CD4-positive, alpha-beta memory T cell (primary cell): ENCODE measurements at regions of chr19 and their contacts with region 1.

Region 1: GRCh38 chr19:36772311-36773222 is at the start of gene ZNF850:
- DNase-seq: peak; percentile 94 to 98 (median 95)
- H3K4me3 ChIP-seq: peak within 1 kb of the TSS; percentile 85 to 90
- H3K4me3 Mint-ChIP-seq: peak within 1 kb of the TSS; percentile 94 to 100 (median 98)
- H3K27ac ChIP-seq: peak within 1 kb of the TSS; percentile 81
- H3K27ac Mint-ChIP-seq: peak within 1 kb of the TSS; percentile 91 to 97 (median 95)
- H3K4me1 ChIP-seq: peaks cover 19% of the 10 kb centered on the region
- H3K4me1 Mint-ChIP-seq: peaks cover 18 to 27% (median 24%) of the 10 kb centered on the region in 4 donors
- H3K27me3 ChIP-seq: no peaks in the 10 kb centered on the region
- H3K27me3 Mint-ChIP-seq: peaks cover 0 to 2% of the 10 kb centered on the region in 2 donors
- total RNA-seq, gene ZNF850: 3.7 to 5.4 TPM

Region 2: GRCh38 chr19:36378625-36379509 is 393.7 kb before region 1 on chr19 and contains the start of gene ZFP14:
- CTCF ChIA-PET with region 1: no interaction called
- POLR2A ChIA-PET with region 1: no interaction called
- intact Hi-C with region 1: loop called (anchors 2 kb)
- DNase-seq: peak; percentile 92 to 96 (median 95)
- H3K4me3 ChIP-seq: peak within 1 kb of the TSS; percentile 76 to 87
- H3K4me3 Mint-ChIP-seq: peak within 1 kb of the TSS; percentile 87 to 96 (median 94)
- H3K27ac ChIP-seq: peak within 1 kb of the TSS; percentile 76
- H3K27ac Mint-ChIP-seq: peak within 1 kb of the TSS; percentile 81 to 97 (median 93)
- H3K4me1 ChIP-seq: peaks cover 18% of the 10 kb centered on the region
- H3K4me1 Mint-ChIP-seq: peaks cover 13 to 34% (median 18%) of the 10 kb centered on the region in 4 donors
- H3K27me3 ChIP-seq: no peaks in the 10 kb centered on the region
- H3K27me3 Mint-ChIP-seq: no peaks in the 10 kb centered on the region
- total RNA-seq, gene ZFP14: 20.7 to 21.2 TPM

Region 3: DNA sequence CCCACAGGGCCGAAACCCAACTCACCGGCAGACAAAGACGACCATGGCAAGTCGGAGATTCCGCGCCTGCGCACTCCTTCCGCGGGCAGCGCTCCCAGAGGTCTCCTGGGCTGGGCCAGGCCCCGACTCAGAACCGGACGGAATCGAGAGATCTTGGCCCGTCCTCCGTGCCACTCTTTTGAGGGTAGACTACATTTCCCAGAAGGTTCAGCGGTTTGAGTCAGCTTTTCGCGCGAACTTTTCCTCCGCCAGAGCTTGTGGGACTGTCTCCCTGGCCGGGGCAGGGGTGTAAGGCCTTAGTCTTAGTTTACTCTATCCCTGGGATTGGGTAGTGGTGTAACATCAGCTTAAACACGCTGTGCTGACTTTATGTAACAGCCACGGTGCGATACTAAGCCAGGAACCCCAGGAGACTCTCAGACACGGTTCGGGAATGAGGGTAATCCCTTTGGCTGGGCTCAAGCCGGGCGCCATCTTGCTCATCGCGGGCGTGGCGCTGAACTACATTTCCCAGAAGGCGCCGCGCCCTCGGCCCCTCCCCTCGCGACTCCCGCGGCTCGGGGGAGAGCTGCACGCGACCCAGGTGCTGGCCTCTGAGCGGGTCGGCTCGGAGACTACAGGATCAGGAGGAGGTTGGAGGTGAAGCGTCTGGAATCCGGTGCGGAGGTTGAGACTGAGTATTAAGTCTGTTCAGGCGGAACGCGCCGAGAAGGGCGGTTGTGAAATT is 244.2 kb before region 1 on chr19 and contains the start of gene ZNF260:
- CTCF ChIA-PET with region 1: no interaction called
- POLR2A ChIA-PET with region 1: interaction called, 7 read pairs
- intact Hi-C with region 1: loop called (anchors 1 kb)
- DNase-seq: peak; percentile 90 to 95 (median 93)
- H3K4me3 ChIP-seq: peak within 1 kb of the TSS; percentile 88 to 99
- H3K4me3 Mint-ChIP-seq: peak within 1 kb of the TSS; percentile 91 to 100 (median 97)
- H3K27ac ChIP-seq: peak within 1 kb of the TSS; percentile 87
- H3K27ac Mint-ChIP-seq: peak within 1 kb of the TSS; percentile 91 to 99 (median 97)
- H3K4me1 ChIP-seq: peaks cover 22% of the 10 kb centered on the region
- H3K4me1 Mint-ChIP-seq: peaks cover 17 to 29% (median 22%) of the 10 kb centered on the region in 4 donors
- H3K27me3 ChIP-seq: no peaks in the 10 kb centered on the region
- H3K27me3 Mint-ChIP-seq: no peaks in the 10 kb centered on the region
- total RNA-seq, gene ZNF260: 15.4 to 18.8 TPM

Region 4: GRCh38 chr19:36605101-36605876 is 167.3 kb before region 1 on chr19 and contains the start of gene ZNF382:
- CTCF ChIA-PET with region 1: no interaction called
- POLR2A ChIA-PET with region 1: interaction called, 6 read pairs
- intact Hi-C with region 1: loop called (anchors 10 kb)
- DNase-seq: peak; percentile 85 to 89 (median 86)
- H3K4me3 ChIP-seq: peak within 1 kb of the TSS; percentile 32 to 85
- H3K4me3 Mint-ChIP-seq: peak within 1 kb of the TSS; percentile 90 to 99 (median 96)
- H3K27ac ChIP-seq: peak within 1 kb of the TSS; percentile 91
- H3K27ac Mint-ChIP-seq: peak within 1 kb of the TSS; percentile 82 to 98 (median 92)
- H3K4me1 ChIP-seq: peaks cover 16% of the 10 kb centered on the region
- H3K4me1 Mint-ChIP-seq: peaks cover 17 to 33% (median 23%) of the 10 kb centered on the region in 4 donors
- H3K27me3 ChIP-seq: no peaks in the 10 kb centered on the region
- H3K27me3 Mint-ChIP-seq: peaks cover 0 to 1% of the 10 kb centered on the region in 2 donors
- total RNA-seq, gene ZNF382: 21.1 to 21.9 TPM

Region 5: DNA sequence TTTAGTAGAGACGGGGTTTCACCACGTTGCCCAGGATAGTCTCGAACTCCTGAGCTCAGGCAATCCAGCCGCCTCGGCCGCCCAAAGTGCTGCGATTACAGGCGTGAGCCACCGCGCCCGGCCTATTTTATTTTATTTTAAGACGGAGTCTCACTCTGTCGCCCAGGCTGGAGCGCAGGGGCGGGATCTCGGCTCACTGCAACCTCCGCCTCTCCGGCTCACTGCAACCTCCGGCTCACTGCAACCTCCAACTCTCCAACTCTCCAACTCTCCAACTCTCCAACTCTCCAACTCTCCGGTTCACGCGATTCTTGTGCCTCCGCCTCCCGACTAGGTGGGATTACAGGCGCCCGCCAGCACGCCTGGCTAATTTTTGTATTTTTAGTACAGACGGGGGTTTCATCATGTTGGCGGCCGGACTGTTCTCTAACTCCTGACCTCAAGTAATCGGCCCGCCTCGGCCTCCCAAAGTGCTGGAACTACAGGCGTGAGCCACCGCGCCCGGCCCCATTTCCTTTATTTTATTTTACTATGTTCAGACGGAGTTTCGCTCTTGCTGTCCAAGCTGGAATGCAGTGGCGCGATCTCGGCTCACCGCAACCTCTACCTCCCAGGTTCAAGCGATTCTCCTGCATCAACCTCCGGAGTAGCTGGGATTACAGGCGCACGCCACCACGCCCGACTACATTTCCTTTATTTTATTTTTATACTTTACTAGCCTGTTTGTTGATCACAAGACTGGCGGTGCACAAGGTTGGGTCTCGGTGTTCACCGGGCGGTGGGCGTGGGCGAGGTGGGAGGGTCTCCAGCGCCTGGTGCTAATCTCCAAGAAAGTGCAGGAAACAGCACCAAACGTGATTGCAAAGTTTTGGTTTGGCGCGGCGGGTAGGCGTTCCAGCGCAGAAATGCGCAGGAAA is 23.8 kb after region 1 on chr19:
- CTCF ChIA-PET with region 1: no interaction called
- POLR2A ChIA-PET with region 1: interaction called, 9 read pairs
- intact Hi-C with region 1: loop called (anchors 1 kb)
- DNase-seq: no peak
- H3K4me3 ChIP-seq: peak overlapping the region; percentile 94 to 96
- H3K4me3 Mint-ChIP-seq: peak overlapping the region; percentile 99 to 100 (median 99)
- H3K27ac ChIP-seq: peak overlapping the region; percentile 79
- H3K27ac Mint-ChIP-seq: peak overlapping the region; percentile 99 to 100 (median 100)
- H3K4me1 ChIP-seq: peaks cover 4% of the 10 kb centered on the region
- H3K4me1 Mint-ChIP-seq: peaks cover 5 to 35% (median 21%) of the 10 kb centered on the region in 4 donors
- H3K27me3 ChIP-seq: no peaks in the 10 kb centered on the region
- H3K27me3 Mint-ChIP-seq: peaks cover 0 to 6% of the 10 kb centered on the region in 2 donors

Region 6: GRCh38 chr19:36915992-36916830 is 143.6 kb after region 1 on chr19 and contains the starts of genes ZNF568 and ZNF829:
- CTCF ChIA-PET with region 1: no interaction called
- POLR2A ChIA-PET with region 1: no interaction called
- intact Hi-C with region 1: loop called (anchors 1 kb)
- DNase-seq: peak; percentile 92 to 98 (median 95)
- H3K4me3 ChIP-seq: peak within 1 kb of the TSS; percentile 60 to 88
- H3K4me3 Mint-ChIP-seq: peak within 1 kb of the TSS; percentile 84 to 97 (median 94)
- H3K27ac ChIP-seq: peak within 1 kb of the TSS; percentile 93
- H3K27ac Mint-ChIP-seq: peak within 1 kb of the TSS; percentile 81 to 97 (median 96)
- H3K4me1 ChIP-seq: peaks cover 14% of the 10 kb centered on the region
- H3K4me1 Mint-ChIP-seq: peaks cover 19 to 39% (median 28%) of the 10 kb centered on the region in 4 donors
- H3K27me3 ChIP-seq: no peaks in the 10 kb centered on the region
- H3K27me3 Mint-ChIP-seq: no peaks in the 10 kb centered on the region
- total RNA-seq, gene ZNF568: 18.8 to 20.3 TPM
- total RNA-seq, gene ZNF829: 8.5 to 9.8 TPM

Region 7: GRCh38 chr19:37077934-37078725 is 305.6 kb after region 1 on chr19 and contains the start of gene ZNF420:
- CTCF ChIA-PET with region 1: no interaction called
- POLR2A ChIA-PET with region 1: no interaction called
- intact Hi-C with region 1: loop called (anchors 1 kb)
- DNase-seq: peak; percentile 85 to 92 (median 87)
- H3K4me3 ChIP-seq: peak within 1 kb of the TSS; percentile 61 to 88
- H3K4me3 Mint-ChIP-seq: peak within 1 kb of the TSS; percentile 90 to 100 (median 98)
- H3K27ac ChIP-seq: peak within 1 kb of the TSS; percentile 73
- H3K27ac Mint-ChIP-seq: peak within 1 kb of the TSS; percentile 85 to 99 (median 95)
- H3K4me1 ChIP-seq: peaks cover 23% of the 10 kb centered on the region
- H3K4me1 Mint-ChIP-seq: peaks cover 22 to 43% (median 27%) of the 10 kb centered on the region in 4 donors
- H3K27me3 ChIP-seq: no peaks in the 10 kb centered on the region
- H3K27me3 Mint-ChIP-seq: no peaks in the 10 kb centered on the region
- total RNA-seq, gene ZNF420: 25.0 to 28.6 TPM